ENCODE measurements at regions of chr1 and their contacts with region 1.

Region 1: GRCh38 chr1:58546520-58547308 is at the start of gene OMA1:
- DNase-seq: peak; percentile 96 to 98 (median 98)
- ATAC-seq: peak; percentile 97
- H3K4me3 ChIP-seq: peak within 1 kb of the TSS; percentile 65
- H3K4me3 Mint-ChIP-seq: peak within 1 kb of the TSS; percentile 92 to 98 (median 96)
- H3K27ac ChIP-seq: peak within 1 kb of the TSS; percentile 95
- H3K27ac Mint-ChIP-seq: peak within 1 kb of the TSS; percentile 95 to 99 (median 99)
- H3K4me1 ChIP-seq: peaks cover 7% of the 10 kb centered on the region in 2 donors
- H3K4me1 Mint-ChIP-seq: peaks cover 11 to 44% (median 33%) of the 10 kb centered on the region in 7 donors
- H3K27me3 ChIP-seq: no peaks in the 10 kb centered on the region
- H3K27me3 Mint-ChIP-seq: peaks cover 0 to 28% (median 0%) of the 10 kb centered on the region in 5 donors
- total RNA-seq, gene OMA1: 22.7 to 72.5 (median 46.5) TPM

Region 2: DNA sequence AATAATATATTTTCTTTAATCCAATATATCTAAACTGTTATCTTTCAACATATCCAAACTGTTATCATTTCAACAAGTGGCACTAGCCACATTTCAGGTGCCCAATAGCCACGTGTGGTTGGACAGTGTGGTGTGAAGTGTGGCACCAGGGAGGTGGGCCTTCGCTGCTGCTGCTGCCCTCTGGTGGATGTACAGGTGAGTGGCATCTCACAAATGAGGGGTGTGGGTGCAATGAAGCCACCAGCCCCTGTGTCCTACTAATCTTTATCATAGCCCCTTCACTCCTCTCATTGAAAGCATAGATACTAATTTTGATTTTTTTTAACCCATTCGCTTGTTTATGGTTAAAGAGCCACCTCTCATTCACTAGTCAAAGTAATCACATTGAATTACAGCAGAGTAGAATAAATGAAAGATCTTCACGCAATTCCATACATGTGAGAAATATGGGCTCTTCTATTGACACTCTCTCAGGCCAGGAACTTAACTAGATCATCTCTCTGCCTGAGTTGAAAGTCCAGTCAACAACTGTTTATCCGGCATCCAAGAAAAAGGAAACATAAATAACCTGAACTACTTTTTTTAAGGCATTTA is 499.4 kb before region 1 on chr1:
- CTCF ChIA-PET with region 1: no interaction called
- POLR2A ChIA-PET with region 1: no interaction called
- intact Hi-C with region 1: loop called in 1 of 2 experiments (anchors 5 kb)
- DNase-seq: peak in 3 of 9 donors; percentile 4 to 7 (median 6)
- ATAC-seq: no peak
- H3K4me3 ChIP-seq: no peak overlapping the region
- H3K4me3 Mint-ChIP-seq: no peak overlapping the region
- H3K27ac ChIP-seq: no peak overlapping the region
- H3K27ac Mint-ChIP-seq: no peak overlapping the region
- H3K4me1 ChIP-seq: no peaks in the 10 kb centered on the region
- H3K4me1 Mint-ChIP-seq: no peaks in the 10 kb centered on the region
- H3K27me3 ChIP-seq: no peaks in the 10 kb centered on the region
- H3K27me3 Mint-ChIP-seq: no peaks in the 10 kb centered on the region

Region 3: DNA sequence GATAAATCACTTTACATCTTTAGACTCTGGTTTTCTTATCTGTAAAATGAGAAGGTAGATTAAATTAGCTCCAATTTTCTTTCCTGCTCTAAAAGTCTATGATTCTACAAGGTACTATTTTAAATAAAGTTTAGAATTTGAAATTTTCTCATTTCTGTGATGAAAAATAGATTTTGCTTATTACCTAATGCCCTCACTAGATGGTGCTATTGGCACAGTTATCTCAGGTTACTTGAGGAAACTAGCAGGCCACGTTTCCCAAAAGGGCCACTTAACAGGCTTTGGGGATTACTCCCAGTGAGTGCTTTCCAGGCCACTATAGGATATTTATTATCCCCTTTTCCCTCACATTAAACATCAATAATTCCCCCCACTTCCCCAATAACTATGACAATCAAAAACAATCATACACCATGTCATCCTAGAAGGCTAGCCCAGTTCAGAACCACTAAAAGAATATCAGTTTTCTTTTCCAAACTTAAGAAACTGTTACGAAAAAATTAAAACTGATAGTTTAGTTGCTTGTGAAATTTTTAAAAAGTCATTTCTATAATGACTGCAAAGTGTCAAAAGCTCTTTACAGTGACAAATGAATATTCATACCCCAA is 30.8 kb before region 1 on chr1:
- CTCF ChIA-PET with region 1: interaction called, 41 read pairs
- POLR2A ChIA-PET with region 1: interaction called, 13 read pairs
- intact Hi-C with region 1: loop called (anchors 1 kb)
- DNase-seq: peak in 7 of 9 donors; percentile 30 to 63 (median 53)
- ATAC-seq: peak; percentile 80
- H3K4me3 ChIP-seq: no peak overlapping the region
- H3K4me3 Mint-ChIP-seq: no peak overlapping the region
- H3K27ac ChIP-seq: no peak overlapping the region
- H3K27ac Mint-ChIP-seq: peak overlapping the region; percentile 11 to 84 (median 78)
- H3K4me1 ChIP-seq: no peaks in the 10 kb centered on the region
- H3K4me1 Mint-ChIP-seq: peaks cover 0 to 28% (median 8%) of the 10 kb centered on the region in 7 donors
- H3K27me3 ChIP-seq: no peaks in the 10 kb centered on the region
- H3K27me3 Mint-ChIP-seq: no peaks in the 10 kb centered on the region

Region 4: DNA sequence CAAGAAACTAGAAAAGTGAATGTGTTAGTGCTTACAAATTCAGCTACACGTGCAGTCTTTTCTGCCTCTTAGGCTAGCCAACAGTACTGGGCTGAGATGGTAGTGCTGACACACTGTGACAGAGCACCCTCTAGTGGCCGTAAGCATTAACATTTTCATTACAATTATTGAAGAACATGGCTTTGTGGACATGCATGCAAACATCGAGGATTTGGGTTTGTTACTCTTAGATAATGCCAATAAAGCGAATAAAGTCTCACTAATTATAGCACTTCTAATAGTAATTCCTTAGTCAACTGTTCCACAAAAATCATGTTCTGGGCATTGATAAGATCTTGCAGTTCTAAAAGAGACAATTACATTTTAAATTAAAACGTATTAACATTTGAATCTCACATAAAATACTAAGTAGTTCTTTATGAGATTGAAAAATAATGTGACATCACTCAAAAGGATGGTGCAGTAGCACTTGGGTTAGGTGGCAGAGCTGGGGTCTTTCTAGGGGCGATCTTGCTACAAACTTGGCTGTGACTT is 106.0 kb after region 1 on chr1:
- CTCF ChIA-PET with region 1: interaction called, 3 read pairs
- POLR2A ChIA-PET with region 1: no interaction called
- intact Hi-C with region 1: loop called (anchors 1 kb)
- DNase-seq: peak; percentile 11 to 66 (median 55)
- ATAC-seq: peak; percentile 96
- H3K4me3 ChIP-seq: no peak overlapping the region
- H3K4me3 Mint-ChIP-seq: no peak overlapping the region
- H3K27ac ChIP-seq: no peak overlapping the region
- H3K27ac Mint-ChIP-seq: peak overlapping the region in 3 of 9 donors; percentile 7 to 49 (median 25)
- H3K4me1 ChIP-seq: peaks cover 0 to 8% of the 10 kb centered on the region in 2 donors
- H3K4me1 Mint-ChIP-seq: peaks cover 17 to 36% (median 25%) of the 10 kb centered on the region in 7 donors
- H3K27me3 ChIP-seq: no peaks in the 10 kb centered on the region
- H3K27me3 Mint-ChIP-seq: no peaks in the 10 kb centered on the region

Region 5: GRCh38 chr1:59043796-59044195 is 497.1 kb after region 1 on chr1:
- CTCF ChIA-PET with region 1: no interaction called
- POLR2A ChIA-PET with region 1: no interaction called
- intact Hi-C with region 1: no loop called
- DNase-seq: no peak
- ATAC-seq: no peak
- H3K4me3 ChIP-seq: no peak overlapping the region
- H3K4me3 Mint-ChIP-seq: no peak overlapping the region
- H3K27ac ChIP-seq: no peak overlapping the region
- H3K27ac Mint-ChIP-seq: peak overlapping the region in 5 of 9 donors; percentile 43 to 93 (median 70)
- H3K4me1 ChIP-seq: peaks cover 30% of the 10 kb centered on the region in 2 donors
- H3K4me1 Mint-ChIP-seq: peaks cover 26 to 70% (median 41%) of the 10 kb centered on the region in 7 donors
- H3K27me3 ChIP-seq: no peaks in the 10 kb centered on the region
- H3K27me3 Mint-ChIP-seq: no peaks in the 10 kb centered on the region

Region 6: DNA sequence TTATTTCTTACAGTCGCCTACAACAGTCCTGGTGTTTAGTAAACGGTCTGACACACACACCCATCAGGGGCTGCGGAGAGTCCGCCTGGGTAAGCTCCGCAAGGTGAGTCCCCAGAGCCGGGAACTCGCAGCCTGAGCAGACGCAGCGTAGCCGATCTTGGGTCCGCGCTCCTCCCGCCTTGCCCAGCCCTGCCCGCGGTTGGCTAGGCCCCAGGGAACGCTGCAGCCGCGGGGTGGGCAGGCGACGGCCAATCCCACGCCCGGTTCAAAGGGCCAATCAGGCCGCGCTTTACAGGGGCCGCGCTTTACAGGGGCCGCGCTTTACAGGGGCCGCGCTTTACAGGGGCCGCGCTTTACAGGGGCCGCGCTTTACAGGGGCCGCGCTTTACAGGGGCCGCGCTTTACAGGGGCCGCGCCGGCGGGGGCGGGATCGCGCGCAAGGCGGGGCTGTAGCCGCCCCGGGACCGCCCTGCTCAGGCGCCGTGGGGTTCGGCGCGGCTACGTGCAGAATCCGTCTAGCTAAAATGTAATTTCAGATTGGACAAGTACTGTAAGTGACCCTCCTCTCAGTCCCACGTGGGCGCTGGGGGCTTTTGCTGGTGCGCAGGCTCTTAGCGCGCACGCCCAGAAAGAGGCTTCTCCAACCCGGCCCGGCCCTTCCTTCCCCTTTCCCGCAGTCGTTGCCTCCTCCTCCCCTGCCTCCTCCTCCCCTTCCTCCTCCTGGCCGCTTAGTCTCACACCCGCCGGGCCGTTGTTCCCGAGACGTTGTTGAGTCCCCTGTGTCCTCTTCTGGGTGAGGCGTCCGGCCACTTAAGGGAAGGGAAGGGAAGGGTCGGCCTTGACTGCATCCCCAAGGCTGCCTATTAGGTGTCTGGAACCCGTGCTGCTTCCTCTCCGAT is 749.9 kb after region 1 on chr1 and contains the start of gene FGGY:
- CTCF ChIA-PET with region 1: no interaction called
- POLR2A ChIA-PET with region 1: interaction called, 3 read pairs
- intact Hi-C with region 1: loop called (anchors 1 kb)
- DNase-seq: peak; percentile 71 to 85 (median 81)
- ATAC-seq: peak; percentile 93
- H3K4me3 ChIP-seq: peak within 1 kb of the TSS; percentile 73
- H3K4me3 Mint-ChIP-seq: peak within 1 kb of the TSS; percentile 77 to 95 (median 92)
- H3K27ac ChIP-seq: peak within 1 kb of the TSS; percentile 85
- H3K27ac Mint-ChIP-seq: peak within 1 kb of the TSS; percentile 83 to 96 (median 92)
- H3K4me1 ChIP-seq: peaks cover 7 to 11% of the 10 kb centered on the region in 2 donors
- H3K4me1 Mint-ChIP-seq: peaks cover 9 to 51% (median 27%) of the 10 kb centered on the region in 7 donors
- H3K27me3 ChIP-seq: no peaks in the 10 kb centered on the region
- H3K27me3 Mint-ChIP-seq: no peaks in the 10 kb centered on the region
- total RNA-seq, gene FGGY: 10.7 to 15.2 (median 13.9) TPM

Region 7: DNA sequence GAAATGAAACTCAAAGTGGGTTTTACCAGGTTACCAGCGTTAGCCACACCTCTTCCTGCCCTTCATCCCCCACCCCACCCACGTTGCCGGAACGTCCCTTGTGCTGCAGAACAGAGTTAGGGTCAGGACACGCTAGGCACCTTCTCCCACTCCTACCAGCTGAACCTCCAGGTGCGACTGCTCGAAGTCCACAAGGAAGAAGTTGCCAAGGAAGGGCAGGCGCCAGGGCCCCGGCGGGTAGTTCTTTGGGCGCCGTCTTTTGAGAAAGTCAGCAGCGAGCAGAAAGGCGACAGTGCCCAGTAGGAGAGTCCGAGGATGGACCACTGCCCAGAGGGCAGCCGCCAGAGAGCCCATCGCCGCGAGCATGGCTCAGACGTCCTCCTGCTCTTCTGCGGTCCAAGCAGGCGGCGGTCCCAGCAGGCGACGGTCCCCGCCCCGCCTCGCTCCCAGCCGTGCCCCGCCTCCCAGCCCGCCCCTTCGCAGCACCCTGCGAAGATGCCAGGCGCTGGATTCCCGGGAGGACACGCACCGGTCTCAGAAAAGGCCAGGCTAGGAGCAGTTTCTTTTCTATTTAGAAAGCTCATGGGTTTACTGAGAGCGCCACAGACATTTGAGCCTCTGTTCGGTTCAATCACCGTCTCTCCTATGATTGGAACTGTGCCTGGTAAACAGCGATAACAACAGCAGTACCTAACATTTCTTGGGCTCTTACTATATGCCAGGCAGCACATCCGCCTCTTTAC is 1379.8 kb after region 1 on chr1 and contains the start of gene CYP2J2:
- CTCF ChIA-PET with region 1: no interaction called
- POLR2A ChIA-PET with region 1: no interaction called
- intact Hi-C with region 1: loop called in 1 of 2 experiments (anchors 10 kb)
- DNase-seq: peak in 8 of 9 donors; percentile 2 to 43 (median 14)
- ATAC-seq: peak; percentile 88
- H3K4me3 ChIP-seq: peak within 1 kb of the TSS; percentile 94
- H3K4me3 Mint-ChIP-seq: peak within 1 kb of the TSS; percentile 78 to 94 (median 92)
- H3K27ac ChIP-seq: peak within 1 kb of the TSS; percentile 54
- H3K27ac Mint-ChIP-seq: peak within 1 kb of the TSS; percentile 39 to 86 (median 74)
- H3K4me1 ChIP-seq: peaks cover 0 to 5% of the 10 kb centered on the region in 2 donors
- H3K4me1 Mint-ChIP-seq: peaks cover 6 to 19% (median 14%) of the 10 kb centered on the region in 7 donors
- H3K27me3 ChIP-seq: peaks cover 5 to 9% of the 10 kb centered on the region in 2 donors
- H3K27me3 Mint-ChIP-seq: peaks cover 7 to 40% (median 25%) of the 10 kb centered on the region in 5 donors
- total RNA-seq, gene CYP2J2: 0.93 to 1.5 (median 1.1) TPM

Measured in naive thymus-derived CD4-positive, alpha-beta T cell (primary cell).